Colonic mucosa (tissue), 4 donors: ENCODE measurements at regions of chr12 and their contacts with region 1.

Region 1: DNA sequence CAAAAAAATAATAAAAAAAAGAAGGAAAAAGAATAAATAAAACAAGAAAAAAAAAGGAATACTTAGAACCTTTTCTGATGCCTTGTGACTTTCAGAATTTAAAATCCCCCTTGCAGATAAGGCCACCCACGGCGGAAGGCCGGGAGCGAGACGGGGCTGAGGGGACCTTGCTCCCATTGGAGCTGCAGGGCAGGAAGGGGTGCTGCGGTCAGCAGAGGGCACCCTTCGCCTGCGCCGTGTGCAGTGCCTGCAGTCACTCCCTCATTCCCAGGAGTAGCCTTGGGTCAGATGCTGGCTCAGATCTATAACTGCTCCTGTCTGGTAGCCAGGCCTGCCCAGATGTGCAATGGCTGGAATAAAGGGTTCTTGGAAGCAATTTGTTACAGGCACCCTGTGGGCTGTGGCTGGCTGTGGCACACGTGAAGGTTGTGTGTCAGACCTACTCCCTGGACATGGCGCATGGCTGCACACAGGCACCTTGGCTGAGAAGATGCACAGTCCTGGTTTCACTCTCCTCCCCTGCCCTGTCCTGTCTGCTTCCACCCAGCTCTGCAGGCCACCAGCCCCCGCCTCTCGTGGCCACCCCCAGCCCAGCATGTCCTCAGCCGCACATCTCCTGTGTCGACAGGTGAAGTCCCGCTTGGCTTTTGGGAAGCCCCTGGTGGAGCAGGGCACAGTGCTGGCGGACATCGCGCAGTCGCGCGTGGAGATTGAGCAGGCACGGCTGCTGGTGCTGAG is 13.4 kb upstream of the ALDH2 start:
- DNase-seq: peak; percentile 65
- H3K4me3 ChIP-seq: no peak overlapping the region
- H3K27ac ChIP-seq: no peak overlapping the region
- H3K4me1 ChIP-seq: no peaks in the 10 kb centered on the region
- H3K27me3 ChIP-seq: no peaks in the 10 kb centered on the region
- CTCF ChIP-seq: peak; percentile 91

Region 2: GRCh38 chr12:111451649-111452129 is 301.6 kb before region 1 on chr12:
- intact Hi-C with region 1: no loop called
- DNase-seq: no peak
- H3K4me3 ChIP-seq: no peak overlapping the region
- H3K27ac ChIP-seq: no peak overlapping the region
- H3K4me1 ChIP-seq: peaks cover 2% of the 10 kb centered on the region
- H3K27me3 ChIP-seq: no peaks in the 10 kb centered on the region
- CTCF ChIP-seq: peak; percentile 76

Region 3: GRCh38 chr12:111557271-111558106 is 195.8 kb before region 1 on chr12:
- intact Hi-C with region 1: no loop called
- DNase-seq: no peak
- H3K4me3 ChIP-seq: no peak overlapping the region
- H3K27ac ChIP-seq: no peak overlapping the region
- H3K4me1 ChIP-seq: no peaks in the 10 kb centered on the region
- H3K27me3 ChIP-seq: no peaks in the 10 kb centered on the region
- CTCF ChIP-seq: no peak

Region 4: GRCh38 chr12:111788178-111788654 is 34.9 kb after region 1 on chr12:
- intact Hi-C with region 1: loop called (anchors 5 kb)
- DNase-seq: no peak
- H3K4me3 ChIP-seq: no peak overlapping the region
- H3K27ac ChIP-seq: peak overlapping the region; percentile 12
- H3K4me1 ChIP-seq: no peaks in the 10 kb centered on the region
- H3K27me3 ChIP-seq: no peaks in the 10 kb centered on the region
- CTCF ChIP-seq: no peak

Region 5: DNA sequence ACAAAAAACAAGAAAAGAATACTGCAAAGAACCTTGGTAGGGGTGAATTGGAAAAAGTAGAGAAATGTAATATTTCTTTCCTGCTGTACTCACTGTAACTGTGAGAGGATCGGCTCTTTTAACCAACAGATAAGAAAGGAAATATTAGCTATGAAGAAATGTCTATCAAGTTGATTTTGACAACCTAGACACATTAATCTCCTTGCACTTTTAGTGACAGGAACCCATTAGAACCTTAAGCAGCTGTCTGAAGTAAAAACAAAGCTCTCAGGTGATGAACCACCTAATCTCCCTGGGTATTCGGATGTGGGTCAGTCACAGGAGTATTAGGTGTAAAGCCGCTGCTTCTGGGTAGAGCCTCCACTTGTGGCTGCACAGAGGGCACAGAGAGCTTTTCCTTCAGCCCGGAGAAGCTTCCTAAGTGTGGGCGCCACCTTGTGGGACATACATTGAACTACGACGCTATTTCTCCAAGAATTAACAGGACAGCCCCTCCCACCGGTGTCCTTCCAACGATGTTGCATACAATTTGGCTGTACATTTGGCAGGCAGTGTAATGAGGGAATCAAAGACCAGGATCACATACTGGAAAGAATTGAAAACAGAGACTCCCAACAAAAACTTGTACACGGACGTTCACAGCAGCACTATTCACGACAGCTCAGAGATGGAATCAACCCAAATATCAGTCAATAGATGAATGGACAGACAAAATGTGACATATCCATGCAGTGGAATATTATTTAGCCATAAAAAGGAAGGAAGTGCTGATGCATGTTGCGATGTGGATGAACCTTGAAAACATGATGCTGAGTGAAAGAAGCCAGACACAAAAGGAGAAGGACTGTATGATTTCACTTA is 59.8 kb after region 1 on chr12:
- intact Hi-C with region 1: loop called (anchors 2 kb)
- DNase-seq: peak; percentile 80
- H3K4me3 ChIP-seq: no peak overlapping the region
- H3K27ac ChIP-seq: no peak overlapping the region
- H3K4me1 ChIP-seq: no peaks in the 10 kb centered on the region
- H3K27me3 ChIP-seq: no peaks in the 10 kb centered on the region
- CTCF ChIP-seq: peak; percentile 56

Region 6: DNA sequence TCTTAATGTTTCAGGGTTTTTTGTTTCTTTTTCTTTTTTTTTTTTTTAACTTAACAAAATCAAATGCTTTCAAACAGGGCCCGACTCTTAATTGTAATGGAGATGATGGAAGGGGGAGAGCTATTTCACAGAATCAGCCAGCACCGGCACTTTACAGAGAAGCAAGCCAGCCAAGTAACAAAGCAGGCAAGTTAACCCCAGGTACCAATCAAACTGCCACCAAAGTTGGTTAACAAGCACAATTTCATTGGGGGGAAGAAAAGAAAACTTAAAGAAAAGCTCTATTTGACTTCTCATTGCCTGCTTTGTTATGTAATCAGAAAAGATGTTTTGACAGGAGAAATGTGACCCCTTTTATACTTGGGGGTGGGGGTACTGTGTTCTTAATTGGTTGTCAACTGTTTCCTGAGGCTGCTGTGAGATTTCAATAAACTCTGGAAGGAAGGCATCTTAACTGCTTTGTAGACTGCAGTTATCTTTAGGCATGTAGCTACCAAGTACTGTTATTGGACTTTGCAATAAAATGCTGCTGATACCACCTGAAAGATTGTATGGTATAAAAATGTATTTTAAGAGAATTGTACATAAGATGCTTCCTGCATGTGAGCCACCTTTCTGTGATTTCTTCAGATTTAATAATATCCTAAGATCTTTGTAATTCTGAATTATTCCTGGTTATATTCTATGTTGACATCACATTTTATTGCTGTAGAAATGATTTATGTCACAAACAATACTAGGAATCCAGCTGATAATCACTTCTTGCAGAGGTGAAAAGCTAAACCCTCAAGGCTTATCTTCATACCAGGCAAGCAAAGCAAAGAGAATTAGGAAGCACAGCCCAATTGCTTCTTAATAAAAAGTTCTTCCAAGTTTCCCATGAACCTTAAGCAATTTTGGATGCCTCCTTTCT is 115.6 kb after region 1 on chr12:
- intact Hi-C with region 1: no loop called
- DNase-seq: no peak
- H3K4me3 ChIP-seq: no peak overlapping the region
- H3K27ac ChIP-seq: no peak overlapping the region
- H3K4me1 ChIP-seq: no peaks in the 10 kb centered on the region
- H3K27me3 ChIP-seq: no peaks in the 10 kb centered on the region
- CTCF ChIP-seq: no peak

Region 7: GRCh38 chr12:112418608-112419298 is 665.4 kb after region 1 on chr12 and contains the start of gene PTPN11:
- intact Hi-C with region 1: no loop called
- DNase-seq: peak; percentile 92
- H3K4me3 ChIP-seq: peak within 1 kb of the TSS; percentile 98
- H3K27ac ChIP-seq: peak within 1 kb of the TSS; percentile 96
- H3K4me1 ChIP-seq: peaks cover 5% of the 10 kb centered on the region
- H3K27me3 ChIP-seq: no peaks in the 10 kb centered on the region
- CTCF ChIP-seq: peak; percentile 34
- total RNA-seq, gene PTPN11: 81.5 to 82.3 TPM